ENCODE measurements at regions of chr7 and their contacts with region 1.

Region 1: GRCh38 chr7:132846086-132846485 is 235.8 kb downstream of the CHCHD3 start:
- DNase-seq: no peak
- H3K4me3 ChIP-seq: no peak overlapping the region
- H3K27ac ChIP-seq: no peak overlapping the region
- H3K4me1 ChIP-seq: no peaks in the 10 kb centered on the region
- H3K27me3 ChIP-seq: no peaks in the 10 kb centered on the region
- CTCF ChIP-seq: no peak

Region 2: GRCh38 chr7:134108813-134109212 is 1262.7 kb after region 1 on chr7:
- CTCF ChIA-PET with region 1: interaction called, 16 read pairs
- POLR2A ChIA-PET with region 1: no interaction called
- intact Hi-C with region 1: no loop called
- DNase-seq: no peak
- H3K4me3 ChIP-seq: no peak overlapping the region
- H3K27ac ChIP-seq: no peak overlapping the region
- H3K4me1 ChIP-seq: no peaks in the 10 kb centered on the region
- H3K27me3 ChIP-seq: no peaks in the 10 kb centered on the region
- CTCF ChIP-seq: no peak; the same call in 1 of the 2 replicates

Measured in PC-9 (cell line).